Mammary epithelial cell (primary cell): ENCODE measurements at regions of chr11 and their contacts with region 1.

Region 1: GRCh38 chr11:45252134-45252855 is 33.8 kb downstream of the SYT13 start:
- DNase-seq: no peak
- H3K4me3 ChIP-seq: no peak overlapping the region
- H3K27ac ChIP-seq: no peak overlapping the region
- H3K4me1 ChIP-seq: no peaks in the 10 kb centered on the region
- H3K27me3 ChIP-seq: peaks cover under 1% of the 10 kb centered on the region
- CTCF ChIP-seq: peak; percentile 55 to 73

Region 2: GRCh38 chr11:44936525-44936924 is 315.8 kb before region 1 on chr11:
- CTCF ChIA-PET with region 1: no interaction called
- dilution Hi-C with region 1: no loop called
- in situ Hi-C with region 1: no loop called
- intact Hi-C with region 1: no loop called
- DNase-seq: peak; percentile 50
- H3K4me3 ChIP-seq: no peak overlapping the region
- H3K27ac ChIP-seq: no peak overlapping the region
- H3K4me1 ChIP-seq: no peaks in the 10 kb centered on the region
- H3K27me3 ChIP-seq: no peaks in the 10 kb centered on the region
- CTCF ChIP-seq: peak; percentile 82 to 94

Region 3: GRCh38 chr11:45301537-45302246 is 49.4 kb after region 1 on chr11:
- CTCF ChIA-PET with region 1: no interaction called
- dilution Hi-C with region 1: loop called (anchors 5 kb)
- in situ Hi-C with region 1: no loop called
- intact Hi-C with region 1: no loop called
- DNase-seq: no peak
- H3K4me3 ChIP-seq: no peak overlapping the region
- H3K27ac ChIP-seq: no peak overlapping the region
- H3K4me1 ChIP-seq: no peaks in the 10 kb centered on the region
- H3K27me3 ChIP-seq: peaks cover 1% of the 10 kb centered on the region
- CTCF ChIP-seq: no peak

Region 4: DNA sequence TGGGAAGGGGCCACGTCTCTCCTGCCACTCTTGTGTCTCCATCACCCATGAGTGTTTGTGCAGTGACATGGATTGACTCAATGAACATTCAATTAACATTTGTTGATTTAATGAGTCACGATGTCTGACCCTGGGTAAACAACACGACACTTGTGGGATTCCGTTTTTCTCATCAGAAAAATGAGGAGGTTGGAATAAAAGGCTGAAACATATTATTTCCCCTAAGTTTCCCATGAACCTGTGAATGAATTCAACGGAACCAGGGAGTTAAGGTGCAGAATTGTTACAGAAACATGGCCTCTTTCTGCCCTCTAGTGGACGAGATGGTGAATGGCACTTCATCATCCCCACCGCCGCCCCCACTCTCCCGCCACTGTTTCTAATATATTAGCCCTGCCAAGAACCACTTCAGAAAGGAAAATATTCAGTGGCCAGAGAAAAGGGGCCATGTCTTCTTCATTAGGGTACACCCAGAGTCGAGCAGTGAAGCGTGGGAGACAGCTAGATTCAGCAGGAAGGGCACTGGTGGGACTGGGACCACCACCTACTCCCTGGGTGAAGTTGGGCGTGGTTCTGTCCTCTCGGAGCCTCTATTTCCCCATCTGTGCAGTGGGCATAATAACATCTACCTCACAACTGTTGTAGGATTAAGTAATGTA is 80.1 kb after region 1 on chr11:
- CTCF ChIA-PET with region 1: no interaction called
- dilution Hi-C with region 1: no loop called
- in situ Hi-C with region 1: no loop called
- intact Hi-C with region 1: loop called (anchors 1 kb)
- DNase-seq: no peak
- H3K4me3 ChIP-seq: no peak overlapping the region
- H3K27ac ChIP-seq: no peak overlapping the region
- H3K4me1 ChIP-seq: no peaks in the 10 kb centered on the region
- H3K27me3 ChIP-seq: no peaks in the 10 kb centered on the region
- CTCF ChIP-seq: peak; percentile 38 to 60